ENCODE measurements at regions of chr1 and their contacts with region 1.

Region 1: DNA sequence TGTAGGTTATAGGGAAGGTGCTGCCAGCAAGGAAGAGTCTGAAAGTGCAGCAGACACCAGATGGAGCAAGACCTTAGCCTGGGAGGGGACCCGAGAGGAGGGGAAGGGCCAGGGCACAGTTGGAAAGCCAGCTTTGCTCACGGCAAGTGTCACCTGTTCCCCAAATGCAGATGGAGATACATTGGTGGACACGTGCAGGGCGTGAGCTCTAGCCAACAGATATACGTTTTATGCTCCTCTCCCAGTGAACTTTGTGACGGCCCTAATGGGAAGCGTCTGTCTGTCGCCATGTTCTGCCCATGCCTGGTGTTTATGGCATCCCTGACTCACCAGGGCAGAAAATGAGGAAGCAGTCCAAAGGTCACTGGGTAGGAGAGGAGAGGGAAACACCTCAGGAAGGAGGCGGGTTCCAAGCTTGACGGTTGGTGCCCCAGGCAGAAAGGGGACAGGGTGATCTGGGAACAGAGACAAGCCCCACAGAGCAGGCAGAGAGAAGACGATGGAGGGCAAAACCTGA is 7.6 kb downstream of the GPA33 start:
- DNase-seq: peak; percentile 83 to 91 (median 88)
- ATAC-seq: peak; percentile 87
- H3K4me3 ChIP-seq: no peak overlapping the region
- H3K4me1 ChIP-seq: peaks cover 42% of the 10 kb centered on the region
- CTCF ChIP-seq: no peak

Region 2: DNA sequence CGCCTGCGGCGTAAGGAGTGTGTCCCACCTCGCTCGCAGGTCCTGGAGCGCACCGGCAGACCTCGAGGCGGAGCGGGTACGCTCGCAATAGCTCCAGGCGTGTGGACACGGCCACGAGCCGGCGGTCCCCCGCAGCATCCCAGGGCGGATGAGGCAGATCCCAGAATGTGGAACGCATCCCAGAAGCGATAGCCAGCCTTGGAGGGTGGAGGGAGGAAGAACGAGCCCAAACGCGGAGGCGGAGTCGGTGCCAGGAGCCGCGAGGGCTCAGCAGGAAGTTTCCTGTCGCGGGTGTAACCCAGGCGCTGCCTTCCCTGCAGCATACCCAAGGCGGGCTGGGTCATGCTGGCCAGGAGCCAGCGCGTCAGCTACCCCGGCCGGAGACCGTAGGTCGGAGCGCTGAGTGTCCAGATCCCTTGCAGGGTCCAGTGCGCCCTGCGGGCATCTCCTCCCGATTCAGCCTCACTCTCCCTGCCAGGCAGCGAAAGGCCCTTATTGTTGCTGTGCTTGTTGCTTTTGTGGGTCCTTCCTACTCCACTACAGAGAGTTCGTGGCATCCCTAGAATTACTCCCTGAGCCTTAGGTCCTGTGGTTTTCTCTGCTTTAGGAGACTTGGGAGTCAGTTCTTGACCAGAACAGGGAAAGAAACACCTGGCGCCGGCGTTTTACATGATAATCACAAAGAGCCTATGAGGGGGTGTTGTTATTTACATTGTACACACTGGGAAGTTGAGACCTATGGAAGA is 39.0 kb after region 1 on chr1:
- intact Hi-C with region 1: loop called in 1 of 2 experiments (anchors 5 kb)
- DNase-seq: peak; percentile 85 to 90 (median 89)
- ATAC-seq: peak; percentile 96
- H3K4me3 ChIP-seq: no peak overlapping the region
- H3K4me1 ChIP-seq: peaks cover 16% of the 10 kb centered on the region
- CTCF ChIP-seq: no peak

Measured in mucosa of descending colon (tissue), 3 donors.